Activated T-helper 1 cell treated with anti-CD3 and anti-CD28 coated beads, Interleukin-12 subunit alpha, Interleukin-12 subunit beta, Interleukin-2, Interleukin-4 antibody, amounts not matched to agents 30 ng/mL and 10 ng/mL and 1 ng/mL, durations not matched to agents 14 hours and 24 hours and 36 hours (primary cell): ENCODE measurements at regions of chr3 and their contacts with region 1.

Region 1: GRCh38 chr3:112642912-112643506 is 2.1 kb upstream of the CCDC80 start:
- DNase-seq: peak; percentile 74
- H3K4me3 Mint-ChIP-seq: peak overlapping the region; percentile 68
- H3K27ac Mint-ChIP-seq: peak overlapping the region; percentile 61
- H3K4me1 Mint-ChIP-seq: peaks cover 27% of the 10 kb centered on the region
- H3K27me3 Mint-ChIP-seq: peaks cover 5% of the 10 kb centered on the region

Region 2: DNA sequence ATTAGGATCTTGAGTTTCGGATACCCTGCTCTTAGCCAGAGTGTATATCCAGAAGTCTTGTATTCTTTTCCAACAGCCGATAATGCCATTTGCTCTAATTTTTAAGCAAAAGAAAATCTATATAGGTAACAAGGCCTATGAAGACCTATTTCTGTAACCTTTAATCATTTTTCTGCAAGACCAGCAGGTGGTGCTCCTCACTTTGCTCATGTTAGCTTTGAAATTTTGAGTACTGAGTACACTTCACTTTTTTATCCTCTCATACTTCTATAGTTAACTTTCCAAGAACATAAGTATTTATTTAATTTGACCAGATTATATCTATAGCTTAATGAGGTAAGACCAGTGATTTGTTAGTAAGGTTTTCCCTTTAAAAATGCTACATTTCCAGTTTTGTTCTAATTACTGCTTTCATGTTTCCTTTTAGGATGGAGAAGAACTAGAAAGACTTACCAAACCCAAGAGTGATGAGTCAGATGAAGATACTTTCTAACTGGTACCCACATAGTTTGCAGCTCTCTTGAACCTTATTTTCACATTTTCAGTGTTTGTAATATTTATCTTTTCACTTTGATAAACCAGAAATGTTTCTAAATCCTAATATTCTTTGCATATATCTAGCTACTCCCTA is 60.6 kb before region 1 on chr3:
- intact Hi-C with region 1: loop called (anchors 1 kb)
- DNase-seq: no peak
- H3K4me3 Mint-ChIP-seq: no peak overlapping the region
- H3K27ac Mint-ChIP-seq: no peak overlapping the region
- H3K4me1 Mint-ChIP-seq: peaks cover 6% of the 10 kb centered on the region
- H3K27me3 Mint-ChIP-seq: no peaks in the 10 kb centered on the region

Region 3: DNA sequence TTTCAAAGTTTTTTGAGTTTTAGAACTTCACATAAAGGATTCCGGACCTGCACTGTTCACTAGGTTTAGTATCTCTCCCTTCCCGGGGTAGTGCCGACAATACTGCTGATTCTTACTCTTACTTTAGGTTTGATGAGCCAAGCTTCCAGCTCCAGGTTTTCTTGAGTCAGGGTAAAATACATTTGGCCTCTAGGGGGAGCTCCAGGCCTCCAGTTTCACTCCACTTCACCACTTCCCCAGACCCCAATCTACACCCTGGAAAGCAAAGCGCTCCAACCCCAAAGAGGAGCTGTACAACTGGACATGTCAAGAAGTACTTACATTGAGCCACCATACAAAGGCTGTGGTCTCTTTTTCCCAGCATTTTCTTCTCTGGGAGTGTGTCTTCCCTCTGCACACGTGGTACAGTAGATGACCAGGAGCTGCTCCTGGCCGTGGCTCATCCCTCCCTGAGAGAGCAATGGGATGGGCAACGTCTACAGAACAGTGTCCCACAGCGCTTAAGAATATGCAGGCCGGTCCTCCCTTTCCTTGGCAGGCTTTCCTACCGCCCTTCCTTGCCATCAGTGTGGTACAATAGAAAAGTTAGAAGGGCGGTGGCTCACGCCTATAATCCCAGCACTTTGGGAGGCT is 91.8 kb after region 1 on chr3:
- intact Hi-C with region 1: loop called (anchors 1 kb)
- DNase-seq: peak; percentile 43
- H3K4me3 Mint-ChIP-seq: no peak overlapping the region
- H3K27ac Mint-ChIP-seq: no peak overlapping the region
- H3K4me1 Mint-ChIP-seq: peaks cover 47% of the 10 kb centered on the region
- H3K27me3 Mint-ChIP-seq: peaks cover 2% of the 10 kb centered on the region

Region 4: DNA sequence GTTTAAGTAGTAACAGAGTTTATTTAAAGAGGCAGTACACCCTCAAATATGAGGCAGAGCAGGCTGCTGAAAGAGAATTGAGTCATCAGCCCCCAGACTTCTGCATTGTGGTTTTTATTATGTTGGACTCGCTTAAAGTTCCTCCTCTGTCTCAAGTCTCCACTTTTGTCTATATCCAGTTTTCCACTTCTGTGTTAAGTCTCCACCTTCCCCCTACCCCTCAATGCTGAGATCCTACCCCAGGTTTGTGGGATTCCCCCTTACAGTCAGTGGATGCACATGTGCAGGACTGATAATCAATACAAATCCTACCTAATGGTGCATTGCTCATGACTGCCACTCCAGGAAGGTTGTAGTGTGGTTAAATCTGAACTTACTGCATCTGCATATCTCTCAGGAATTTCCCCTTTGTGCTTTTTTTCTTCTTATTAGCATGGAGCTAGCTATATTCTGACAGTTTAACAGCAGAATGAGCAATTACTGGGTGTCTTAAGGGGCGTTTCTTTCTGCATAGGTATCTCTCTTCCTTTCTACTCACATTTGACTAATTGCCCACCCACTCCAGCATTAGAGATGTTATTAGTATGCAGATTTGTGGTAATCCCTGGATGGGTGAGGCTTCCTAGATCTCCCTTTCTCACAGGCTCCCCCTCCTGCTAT is 215.5 kb after region 1 on chr3:
- intact Hi-C with region 1: loop called (anchors 1 kb)
- DNase-seq: no peak
- H3K4me3 Mint-ChIP-seq: peak overlapping the region; percentile 13
- H3K27ac Mint-ChIP-seq: peak overlapping the region; percentile 71
- H3K4me1 Mint-ChIP-seq: peaks cover 35% of the 10 kb centered on the region
- H3K27me3 Mint-ChIP-seq: no peaks in the 10 kb centered on the region

Region 5: GRCh38 chr3:113019182-113020137 is 376.5 kb after region 1 on chr3:
- intact Hi-C with region 1: loop called (anchors 2 kb)
- DNase-seq: peak; percentile 77
- H3K4me3 Mint-ChIP-seq: peak overlapping the region; percentile 91
- H3K27ac Mint-ChIP-seq: peak overlapping the region; percentile 89
- H3K4me1 Mint-ChIP-seq: peaks cover 58% of the 10 kb centered on the region
- H3K27me3 Mint-ChIP-seq: no peaks in the 10 kb centered on the region

Region 6: GRCh38 chr3:113287803-113288648 is 645.0 kb after region 1 on chr3:
- intact Hi-C with region 1: loop called (anchors 1 kb)
- DNase-seq: peak; percentile 10
- H3K4me3 Mint-ChIP-seq: no peak overlapping the region
- H3K27ac Mint-ChIP-seq: no peak overlapping the region
- H3K4me1 Mint-ChIP-seq: peaks cover 6% of the 10 kb centered on the region
- H3K27me3 Mint-ChIP-seq: peaks cover 2% of the 10 kb centered on the region